ENCODE measurements at regions of chr10 and their contacts with region 1.

Region 1: GRCh38 chr10:69914398-69915214 is 112.9 kb downstream of the COL13A1 start:
- DNase-seq: peak; percentile 81

Region 2: DNA sequence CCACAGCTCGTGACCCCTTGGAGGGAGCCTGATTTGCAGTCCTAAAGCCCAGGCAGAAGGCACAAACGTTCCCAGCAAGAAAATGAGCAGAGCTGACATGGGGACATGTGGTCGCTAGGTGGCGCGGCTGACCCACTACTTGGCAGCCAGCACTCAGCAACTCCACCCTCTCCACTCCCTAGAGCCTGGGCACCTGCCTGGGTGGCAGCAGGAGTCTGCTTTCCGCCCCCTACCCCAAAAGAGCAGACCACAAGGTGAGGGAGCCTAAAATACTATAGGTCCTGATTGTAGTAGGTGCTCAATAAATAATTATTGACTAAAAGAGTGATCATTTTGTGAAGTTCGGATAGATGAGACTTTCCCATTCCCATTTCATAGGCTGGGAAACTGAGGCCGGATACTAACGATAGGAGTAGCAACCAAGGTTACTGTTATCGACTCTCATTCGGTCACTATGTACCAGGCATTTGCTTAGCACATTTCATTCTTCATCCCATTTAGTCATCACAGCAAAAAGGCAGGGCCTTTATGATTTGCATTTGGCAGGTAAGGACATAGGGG is 398.8 kb before region 1 on chr10:
- intact Hi-C with region 1: loop called (anchors 10 kb)
- DNase-seq: no peak

Region 3: GRCh38 chr10:69644658-69645295 is 269.8 kb before region 1 on chr10:
- intact Hi-C with region 1: loop called (anchors 2 kb)
- DNase-seq: no peak

Region 4: DNA sequence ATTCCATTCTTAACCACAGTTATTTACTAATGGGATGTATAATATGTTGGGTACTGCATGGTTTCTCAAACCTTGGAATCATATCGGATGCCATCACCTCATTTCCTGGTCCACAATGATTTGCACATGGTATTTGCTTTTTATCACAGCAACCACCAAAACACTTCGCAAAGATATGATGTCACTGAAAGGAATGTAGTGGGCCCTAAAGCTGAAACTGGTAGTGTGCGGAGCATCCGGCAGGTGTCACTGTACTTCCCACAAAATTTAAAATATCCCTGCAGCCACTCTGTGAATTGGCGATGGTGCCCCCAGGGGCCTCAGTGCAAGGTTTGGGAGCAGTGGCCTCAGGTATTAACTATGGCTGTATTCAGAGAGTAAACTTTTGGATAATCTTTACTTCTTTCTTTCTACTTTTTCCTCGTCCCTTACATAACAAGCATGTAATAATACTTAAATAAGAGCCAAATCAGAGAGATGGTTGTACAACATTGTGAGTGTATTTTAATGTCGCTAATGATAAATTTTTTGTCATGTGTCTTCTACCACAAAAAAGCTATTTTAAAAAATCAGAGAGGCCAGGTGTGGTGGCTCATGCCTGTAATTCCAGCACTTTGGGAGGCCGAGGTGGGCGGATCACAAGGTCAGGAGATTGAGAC is 218.4 kb before region 1 on chr10:
- intact Hi-C with region 1: loop called (anchors 5 kb)
- DNase-seq: no peak

Region 5: GRCh38 chr10:69731184-69731583 is 183.4 kb before region 1 on chr10:
- intact Hi-C with region 1: loop called (anchors 5 kb)
- DNase-seq: no peak

Region 6: GRCh38 chr10:69786791-69787190 is 127.8 kb before region 1 on chr10:
- intact Hi-C with region 1: loop called (anchors 5 kb)
- DNase-seq: no peak

Region 7: GRCh38 chr10:69800109-69800508 is 114.5 kb before region 1 on chr10:
- intact Hi-C with region 1: loop called (anchors 5 kb)
- DNase-seq: no peak